SK-N-SH (cell line): ENCODE measurements at regions of chrX and their contacts with region 1.

Region 1: GRCh38 chrX:48945516-48946348 is 11.7 kb downstream of the OTUD5 start:
- DNase-seq: peak; percentile 75
- H3K4me3 ChIP-seq: no peak overlapping the region
- H3K27ac ChIP-seq: no peak overlapping the region
- H3K4me1 ChIP-seq: no peaks in the 10 kb centered on the region; a peak in 1 of 4 replicates
- H3K27me3 ChIP-seq: no peaks in the 10 kb centered on the region
- CTCF ChIP-seq: peak; percentile 95
- EP300 ChIP-seq: no peak
- RAD21 ChIP-seq: peak; percentile 73

Region 2: GRCh38 chrX:48957827-48958634 is 12.3 kb after region 1 on chrX:
- CTCF ChIA-PET with region 1: interaction called, 12 read pairs
- POLR2A ChIA-PET with region 1: no interaction called
- DNase-seq: peak; percentile 94
- H3K4me3 ChIP-seq: peak overlapping the region; percentile 82 to 93
- H3K27ac ChIP-seq: peak overlapping the region; percentile 99
- H3K4me1 ChIP-seq: peaks cover 10 to 45% of the 10 kb centered on the region in 2 experiments; a peak in 3 of 4 replicates
- H3K27me3 ChIP-seq: 0 out of 2 replicates have a peak, but pooled peaks cover 4% of the 10 kb centered on the region
- CTCF ChIP-seq: no peak
- EP300 ChIP-seq: peak in 1 of 2 experiments; percentile 77; a peak in 2 of 4 replicates
- RAD21 ChIP-seq: no peak

Region 3: DNA sequence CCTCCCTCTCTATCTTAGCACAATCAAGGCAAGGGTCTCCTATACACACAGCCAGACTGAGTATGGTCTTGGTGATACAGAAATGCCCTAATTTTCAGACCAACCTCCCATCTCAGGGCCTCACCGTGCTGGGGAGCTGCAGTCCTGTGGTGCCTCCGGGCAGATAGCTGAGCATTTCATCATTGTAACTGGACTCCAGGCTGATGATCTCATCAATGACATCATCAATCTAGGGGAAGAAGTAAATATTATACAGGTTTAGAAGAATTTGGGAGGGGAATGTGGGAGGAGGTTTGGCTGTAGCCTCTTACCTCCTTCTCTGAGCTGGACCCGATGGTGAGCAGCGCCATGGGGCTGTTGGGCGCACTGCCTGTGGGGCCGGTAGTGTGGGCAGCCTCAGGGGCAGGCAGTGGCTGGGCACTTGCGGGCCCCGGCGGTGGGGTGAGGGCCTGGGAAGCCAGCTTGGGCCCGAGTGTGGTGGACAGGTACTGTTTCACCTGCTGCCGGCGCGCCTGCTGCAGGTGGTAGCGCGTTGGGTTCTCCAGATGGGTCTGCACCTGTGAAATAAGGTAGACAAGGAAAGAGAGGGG is 92.2 kb after region 1 on chrX:
- CTCF ChIA-PET with region 1: no interaction called
- POLR2A ChIA-PET with region 1: no interaction called
- DNase-seq: no peak
- H3K4me3 ChIP-seq: no peak overlapping the region
- H3K27ac ChIP-seq: no peak overlapping the region
- H3K4me1 ChIP-seq: peaks cover 8 to 17% of the 10 kb centered on the region in 2 experiments; a peak in 3 of 4 replicates
- H3K27me3 ChIP-seq: no peaks in the 10 kb centered on the region
- CTCF ChIP-seq: no peak
- EP300 ChIP-seq: no peak
- RAD21 ChIP-seq: no peak

Region 4: DNA sequence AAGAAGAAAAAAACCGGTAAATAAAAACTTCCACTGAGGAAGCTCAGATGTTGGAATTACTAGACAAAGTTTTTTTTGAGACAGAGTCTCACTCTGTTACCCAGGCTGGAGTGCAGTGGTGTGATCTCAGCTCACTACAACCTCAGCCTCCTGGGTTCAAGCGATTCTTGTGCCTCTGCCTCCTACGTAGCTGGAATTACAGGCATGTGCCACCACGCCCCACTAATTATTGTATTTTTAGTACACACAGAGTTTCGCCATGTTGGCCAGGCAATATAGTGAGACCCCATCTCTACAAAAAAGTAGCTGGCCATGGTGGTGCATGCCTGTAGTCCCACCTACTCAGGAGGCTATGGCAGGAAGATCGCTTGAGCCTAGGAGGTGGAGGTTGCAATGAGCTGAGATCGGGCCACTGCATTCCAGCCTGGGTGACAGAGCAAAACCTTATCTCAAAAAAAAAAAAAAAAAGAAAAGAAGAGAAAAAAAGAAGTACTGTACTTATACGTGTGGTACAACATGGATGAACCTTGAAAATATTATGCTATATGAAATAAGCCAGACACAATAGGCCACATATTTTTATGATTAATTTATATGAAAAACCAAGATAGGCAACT is 143.7 kb after region 1 on chrX:
- CTCF ChIA-PET with region 1: no interaction called
- POLR2A ChIA-PET with region 1: no interaction called
- DNase-seq: no peak
- H3K4me3 ChIP-seq: no peak overlapping the region
- H3K27ac ChIP-seq: no peak overlapping the region
- H3K4me1 ChIP-seq: no peaks in the 10 kb centered on the region
- H3K27me3 ChIP-seq: peaks cover 8% of the 10 kb centered on the region; the same call in 1 of the 2 replicates
- CTCF ChIP-seq: no peak
- EP300 ChIP-seq: no peak
- RAD21 ChIP-seq: no peak